ENCODE measurements at regions of chr13 and their contacts with region 1.

Region 1: GRCh38 chr13:71867131-71867814 is at the start of gene DACH1:
- DNase-seq: peak; percentile 93
- H3K4me3 ChIP-seq: peak within 1 kb of the TSS; percentile 75 to 98 (median 95)
- H3K27ac ChIP-seq: peak within 1 kb of the TSS; percentile 48
- H3K4me1 ChIP-seq: peaks cover 3% of the 10 kb centered on the region
- H3K27me3 ChIP-seq: peaks cover 0 to 4% of the 10 kb centered on the region in 2 experiments
- CTCF ChIP-seq: no peak
- POLR2A ChIP-seq: peak; percentile 20
- total RNA-seq, gene DACH1: 24.0 and 28.3 TPM in 2 replicates

Region 2: GRCh38 chr13:70723732-70724131 is 1143.5 kb before region 1 on chr13:
- CTCF ChIA-PET with region 1: interaction called, 3 read pairs
- POLR2A ChIA-PET with region 1: no interaction called
- dilution Hi-C with region 1: no loop called
- intact Hi-C with region 1: loop called (anchors 2 kb)
- DNase-seq: peak; percentile 62
- H3K4me3 ChIP-seq: no peak overlapping the region
- H3K27ac ChIP-seq: no peak overlapping the region
- H3K4me1 ChIP-seq: no peaks in the 10 kb centered on the region
- H3K27me3 ChIP-seq: no peaks in the 10 kb centered on the region
- CTCF ChIP-seq: peak in 1 of 2 donors; percentile 28
- POLR2A ChIP-seq: no peak

Region 3: GRCh38 chr13:71290963-71291841 is 576.1 kb before region 1 on chr13:
- CTCF ChIA-PET with region 1: no interaction called
- POLR2A ChIA-PET with region 1: no interaction called
- dilution Hi-C with region 1: no loop called
- intact Hi-C with region 1: no loop called
- DNase-seq: peak; percentile 25
- H3K4me3 ChIP-seq: no peak overlapping the region
- H3K27ac ChIP-seq: no peak overlapping the region
- H3K4me1 ChIP-seq: no peaks in the 10 kb centered on the region
- H3K27me3 ChIP-seq: no peaks in the 10 kb centered on the region
- CTCF ChIP-seq: no peak
- POLR2A ChIP-seq: no peak

Region 4: DNA sequence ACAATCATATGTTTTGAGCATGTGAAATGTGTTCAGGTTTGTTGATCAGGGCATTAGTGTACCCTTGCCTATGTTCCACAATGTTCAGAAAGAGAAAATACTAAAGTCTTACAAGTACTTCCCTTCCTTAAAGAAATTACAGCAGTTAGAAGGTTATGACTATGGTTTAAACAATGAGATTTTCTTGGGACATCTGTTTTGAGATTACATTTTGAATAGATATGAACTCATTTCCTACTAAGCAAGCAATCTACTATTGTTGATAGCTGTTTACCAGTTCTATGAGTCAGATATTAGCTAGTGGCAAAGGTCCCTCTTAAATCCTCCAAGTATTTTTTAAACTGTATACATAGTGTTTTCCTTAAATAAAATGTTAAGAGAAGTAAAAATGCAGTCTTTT is 241.6 kb before region 1 on chr13:
- CTCF ChIA-PET with region 1: interaction called, 4 read pairs
- POLR2A ChIA-PET with region 1: no interaction called
- dilution Hi-C with region 1: no loop called
- intact Hi-C with region 1: loop called (anchors 2 kb)
- DNase-seq: peak; percentile 93
- H3K4me3 ChIP-seq: peak overlapping the region in 1 of 3 experiments; percentile 45
- H3K27ac ChIP-seq: peak overlapping the region; percentile 83
- H3K4me1 ChIP-seq: peaks cover 56% of the 10 kb centered on the region
- H3K27me3 ChIP-seq: no peaks in the 10 kb centered on the region
- CTCF ChIP-seq: no peak
- POLR2A ChIP-seq: no peak

Region 5: DNA sequence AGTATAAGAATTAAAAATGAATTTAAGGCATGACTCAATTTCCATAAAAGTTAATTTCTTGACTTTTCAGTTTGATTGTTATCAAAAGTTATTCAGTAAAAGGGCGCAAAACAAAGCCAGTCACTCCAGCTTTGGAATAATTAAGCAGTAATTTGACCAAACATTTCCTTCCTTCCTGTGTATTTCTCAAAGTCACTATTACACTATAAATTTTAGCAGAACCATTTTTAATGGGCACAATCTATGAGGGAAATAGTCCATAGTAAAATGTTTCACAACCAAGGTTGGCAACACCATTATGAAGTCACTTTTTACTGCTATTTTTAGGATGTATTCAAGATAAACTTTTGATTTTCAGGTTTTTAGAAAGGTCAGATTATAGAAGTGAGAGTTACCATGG is 91.3 kb before region 1 on chr13:
- CTCF ChIA-PET with region 1: interaction called, 3 read pairs
- POLR2A ChIA-PET with region 1: no interaction called
- dilution Hi-C with region 1: no loop called
- intact Hi-C with region 1: loop called (anchors 5 kb)
- DNase-seq: peak; percentile 64
- H3K4me3 ChIP-seq: no peak overlapping the region
- H3K27ac ChIP-seq: no peak overlapping the region
- H3K4me1 ChIP-seq: peaks cover 6% of the 10 kb centered on the region
- H3K27me3 ChIP-seq: no peaks in the 10 kb centered on the region
- CTCF ChIP-seq: no peak
- POLR2A ChIP-seq: no peak

Region 6: DNA sequence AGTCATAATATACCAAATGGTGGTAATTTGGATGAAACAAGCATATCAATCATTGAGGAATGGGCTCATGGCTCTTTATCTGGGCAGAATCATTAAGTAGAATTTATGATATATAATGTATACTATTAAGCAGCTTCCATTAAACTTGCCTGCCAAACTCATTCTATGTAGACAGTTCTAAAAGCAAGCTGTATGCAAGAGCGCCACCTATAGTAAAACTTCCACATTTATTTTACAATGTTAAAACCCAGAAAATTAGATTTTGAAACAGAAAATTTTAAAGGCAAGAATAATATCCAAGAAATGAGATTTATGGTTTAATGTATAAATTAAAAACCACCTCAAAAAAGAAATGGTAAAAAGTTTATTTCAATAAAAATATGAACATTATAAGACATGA is 698.6 kb after region 1 on chr13:
- CTCF ChIA-PET with region 1: interaction called, 3 read pairs
- POLR2A ChIA-PET with region 1: no interaction called
- dilution Hi-C with region 1: no loop called
- intact Hi-C with region 1: loop called (anchors 10 kb)
- DNase-seq: peak; percentile 25
- H3K4me3 ChIP-seq: no peak overlapping the region
- H3K27ac ChIP-seq: no peak overlapping the region
- H3K4me1 ChIP-seq: no peaks in the 10 kb centered on the region
- H3K27me3 ChIP-seq: no peaks in the 10 kb centered on the region
- CTCF ChIP-seq: peak; percentile 28 to 37
- POLR2A ChIP-seq: no peak

Region 7: GRCh38 chr13:72886272-72887062 is 1019.2 kb after region 1 on chr13:
- CTCF ChIA-PET with region 1: no interaction called
- POLR2A ChIA-PET with region 1: no interaction called
- dilution Hi-C with region 1: no loop called
- intact Hi-C with region 1: no loop called
- DNase-seq: no peak
- H3K4me3 ChIP-seq: no peak overlapping the region
- H3K27ac ChIP-seq: no peak overlapping the region
- H3K4me1 ChIP-seq: no peaks in the 10 kb centered on the region
- H3K27me3 ChIP-seq: no peaks in the 10 kb centered on the region
- CTCF ChIP-seq: no peak
- POLR2A ChIP-seq: no peak